PC-9 (cell line): ENCODE measurements at regions of chr7 and their contacts with region 1.

Region 1: GRCh38 chr7:42084263-42084662 is 152.7 kb downstream of the GLI3 start:
- DNase-seq: no peak
- H3K4me3 ChIP-seq: no peak overlapping the region
- H3K27ac ChIP-seq: no peak overlapping the region
- H3K4me1 ChIP-seq: no peaks in the 10 kb centered on the region
- H3K27me3 ChIP-seq: peaks cover 69% of the 10 kb centered on the region
- CTCF ChIP-seq: no peak

Region 2: DNA sequence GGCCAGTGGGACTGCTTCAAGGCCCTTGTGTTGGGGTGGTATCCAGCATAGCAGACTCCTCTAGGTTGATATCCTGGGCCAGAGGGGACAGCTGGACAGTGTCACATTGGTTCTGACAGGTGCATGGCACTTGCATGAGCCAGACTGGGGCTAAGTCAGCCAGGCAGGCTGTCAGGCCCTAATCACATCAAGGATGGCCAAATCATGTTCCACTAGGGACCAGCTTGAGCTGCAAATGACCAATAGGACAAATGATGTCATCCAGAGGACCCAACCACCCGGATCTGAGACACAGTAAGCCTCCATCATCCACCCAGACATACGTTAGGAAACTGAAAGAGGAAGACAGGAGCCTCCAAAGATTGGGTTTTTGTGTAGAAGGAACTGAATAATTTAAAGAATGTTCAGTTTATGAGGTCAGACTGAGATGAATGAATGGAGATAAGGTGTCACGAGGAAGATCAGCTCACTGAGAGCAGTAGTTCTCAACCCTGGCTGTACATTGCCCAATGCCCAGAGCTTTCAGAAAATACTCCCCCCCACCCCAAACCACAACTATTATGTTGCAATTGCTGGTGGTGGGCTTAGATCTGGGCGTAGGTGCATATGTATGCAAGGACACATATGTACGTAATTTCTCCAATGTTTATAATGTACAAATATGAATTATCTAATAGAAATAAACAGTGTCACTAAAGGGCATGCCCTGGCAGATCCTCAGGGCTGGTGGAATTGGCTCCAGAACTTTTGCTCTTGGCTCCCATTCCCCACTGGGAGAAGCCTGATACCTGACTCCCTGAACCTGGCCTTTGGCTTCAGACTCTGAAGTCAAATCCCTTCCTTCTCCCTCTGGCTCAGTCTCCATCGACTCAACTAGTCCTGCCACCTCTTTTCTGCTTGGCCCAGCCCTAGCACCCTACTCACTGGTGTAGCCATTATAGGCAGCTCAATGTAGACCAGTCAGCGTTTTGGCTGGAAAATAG is 306.1 kb before region 1 on chr7:
- CTCF ChIA-PET with region 1: no interaction called
- POLR2A ChIA-PET with region 1: no interaction called
- intact Hi-C with region 1: no loop called
- DNase-seq: no peak
- H3K4me3 ChIP-seq: no peak overlapping the region
- H3K27ac ChIP-seq: no peak overlapping the region
- H3K4me1 ChIP-seq: no peaks in the 10 kb centered on the region
- H3K27me3 ChIP-seq: no peaks in the 10 kb centered on the region
- CTCF ChIP-seq: no peak

Region 3: DNA sequence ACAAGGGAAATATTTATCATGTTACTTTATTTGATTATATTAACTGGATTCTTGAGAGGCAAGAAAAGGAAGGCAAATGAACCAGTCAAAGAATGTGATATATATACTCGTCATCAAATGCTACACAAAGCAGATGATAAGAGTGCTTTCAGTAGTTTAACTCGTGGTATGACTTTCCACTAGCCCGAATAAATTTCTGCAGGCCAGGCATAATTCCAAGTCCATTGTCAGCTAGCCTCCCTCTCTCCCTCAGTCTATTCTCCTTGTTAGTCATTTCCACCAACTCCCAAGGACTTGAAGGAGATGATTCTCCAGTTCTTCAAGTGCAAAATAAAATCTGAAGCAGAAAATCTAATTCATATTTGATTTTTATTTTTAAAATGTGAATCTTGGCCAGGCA is 37.8 kb before region 1 on chr7:
- CTCF ChIA-PET with region 1: no interaction called
- POLR2A ChIA-PET with region 1: no interaction called
- intact Hi-C with region 1: no loop called
- DNase-seq: no peak
- H3K4me3 ChIP-seq: no peak overlapping the region
- H3K27ac ChIP-seq: no peak overlapping the region
- H3K4me1 ChIP-seq: no peaks in the 10 kb centered on the region
- H3K27me3 ChIP-seq: peaks cover 99% of the 10 kb centered on the region
- CTCF ChIP-seq: no peak

Region 4: GRCh38 chr7:42407828-42408227 is 323.6 kb after region 1 on chr7:
- CTCF ChIA-PET with region 1: no interaction called
- POLR2A ChIA-PET with region 1: no interaction called
- intact Hi-C with region 1: no loop called
- DNase-seq: no peak
- H3K4me3 ChIP-seq: no peak overlapping the region
- H3K27ac ChIP-seq: no peak overlapping the region
- H3K4me1 ChIP-seq: no peaks in the 10 kb centered on the region
- H3K27me3 ChIP-seq: peaks cover 56% of the 10 kb centered on the region
- CTCF ChIP-seq: no peak

Region 5: DNA sequence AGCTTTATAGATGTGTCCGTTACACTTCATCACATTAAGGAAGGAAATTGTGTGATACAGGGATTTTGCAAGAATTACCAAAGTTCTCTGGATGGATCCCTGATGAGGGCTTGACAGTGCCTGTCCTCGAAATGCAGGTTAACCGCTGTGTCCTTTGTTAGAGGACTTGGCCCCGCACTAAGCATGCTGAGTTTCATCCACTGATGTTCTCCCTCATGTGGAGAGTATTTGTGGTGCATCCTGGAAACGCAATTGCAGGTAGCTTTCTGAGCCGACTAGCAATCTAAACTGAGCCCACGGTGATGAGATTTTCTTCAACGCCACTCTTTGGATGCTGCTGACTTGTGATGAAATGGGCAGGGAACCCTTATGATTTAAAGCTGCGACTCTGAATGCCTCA is 1426.8 kb after region 1 on chr7:
- CTCF ChIA-PET with region 1: interaction called, 10 read pairs
- POLR2A ChIA-PET with region 1: no interaction called
- intact Hi-C with region 1: no loop called
- DNase-seq: no peak
- H3K4me3 ChIP-seq: no peak overlapping the region
- H3K27ac ChIP-seq: no peak overlapping the region
- H3K4me1 ChIP-seq: no peaks in the 10 kb centered on the region
- H3K27me3 ChIP-seq: peaks cover 90% of the 10 kb centered on the region
- CTCF ChIP-seq: peak; percentile 45; the same call in 1 of the 2 replicates